Esophagus muscularis mucosa (tissue), 4 donors: ENCODE measurements at regions of chr1 and their contacts with region 1.

Region 1: GRCh38 chr1:203273206-203273868 is 32.0 kb upstream of the BTG2 start:
- DNase-seq: peak; percentile 96
- H3K4me3 ChIP-seq: peak overlapping the region; percentile 30 to 53 (median 38)
- H3K27ac ChIP-seq: peak overlapping the region; percentile 93 to 98 (median 95)
- H3K4me1 ChIP-seq: peaks cover 60 to 83% (median 70%) of the 10 kb centered on the region in 4 donors
- H3K27me3 ChIP-seq: no peaks in the 10 kb centered on the region
- CTCF ChIP-seq: peak; percentile 86 to 99 (median 99)
- EP300 ChIP-seq: no peak
- POLR2A ChIP-seq: no peak

Region 2: DNA sequence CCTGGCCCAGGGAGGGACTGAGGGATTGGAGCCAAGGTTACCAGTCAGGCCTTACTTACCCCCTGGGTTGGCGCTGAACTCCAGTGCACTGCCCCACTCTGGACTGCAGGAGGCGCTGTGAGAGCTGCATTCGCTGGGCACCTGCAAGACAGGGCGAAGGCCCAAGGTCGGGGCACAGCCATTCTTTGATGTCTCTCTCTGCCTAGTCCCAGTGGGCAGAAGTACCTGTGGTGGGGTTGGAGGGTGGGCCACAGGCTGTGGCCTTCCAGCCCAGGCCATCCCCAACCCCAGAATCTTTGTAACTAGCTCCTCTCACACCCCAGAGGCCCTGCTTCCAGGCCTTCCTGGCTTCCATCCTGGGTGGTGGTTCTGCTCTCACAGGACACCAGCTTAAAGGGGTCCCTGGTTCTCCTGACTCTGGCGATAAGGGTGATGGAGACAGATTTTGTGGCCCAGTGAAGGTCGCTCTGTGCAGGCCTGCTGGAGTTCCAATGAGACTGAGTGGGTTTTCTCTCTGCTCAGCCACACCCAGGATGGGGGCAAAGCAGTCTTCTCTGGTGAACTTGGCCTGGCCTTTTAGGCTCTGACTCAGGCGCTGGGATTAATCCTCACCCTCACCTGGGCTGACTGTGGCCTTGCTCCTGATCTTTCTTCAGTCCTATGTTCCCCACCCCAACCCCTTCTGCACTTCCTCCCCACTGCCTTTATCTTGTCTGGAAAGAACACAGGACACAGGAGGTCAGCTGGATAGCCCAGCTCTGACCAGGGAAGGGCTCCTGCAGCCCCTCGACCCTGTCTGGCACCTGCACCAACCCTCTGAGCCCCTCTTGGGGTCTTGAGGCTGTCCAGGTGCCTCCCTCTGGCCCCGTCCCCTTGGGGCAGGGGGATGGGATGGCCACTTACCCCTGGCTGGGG is 188.5 kb before region 1 on chr1:
- intact Hi-C with region 1: no loop called
- DNase-seq: peak; percentile 74
- H3K4me3 ChIP-seq: no peak overlapping the region
- H3K27ac ChIP-seq: no peak overlapping the region
- H3K4me1 ChIP-seq: peaks cover 0 to 2% (median 0%) of the 10 kb centered on the region in 4 donors
- H3K27me3 ChIP-seq: peaks cover 0 to 22% (median 0%) of the 10 kb centered on the region in 4 donors
- CTCF ChIP-seq: no peak
- EP300 ChIP-seq: no peak
- POLR2A ChIP-seq: no peak

Region 3: GRCh38 chr1:203304919-203305808 is 31.8 kb after region 1 on chr1 and contains the start of gene BTG2:
- intact Hi-C with region 1: loop called (anchors 5 kb)
- DNase-seq: peak; percentile 98
- H3K4me3 ChIP-seq: peak within 1 kb of the TSS; percentile 99
- H3K27ac ChIP-seq: peak within 1 kb of the TSS; percentile 99 to 100 (median 100)
- H3K4me1 ChIP-seq: peaks cover 31 to 48% (median 45%) of the 10 kb centered on the region in 4 donors
- H3K27me3 ChIP-seq: no peaks in the 10 kb centered on the region
- CTCF ChIP-seq: no peak
- EP300 ChIP-seq: peak; percentile 64
- POLR2A ChIP-seq: peak; percentile 100
- total RNA-seq, gene BTG2: 67.7 to 656 (median 159) TPM

Region 4: GRCh38 chr1:203486618-203487370 is 213.5 kb after region 1 on chr1:
- intact Hi-C with region 1: loop called (anchors 5 kb)
- DNase-seq: no peak
- H3K4me3 ChIP-seq: peak overlapping the region; percentile 31 to 52 (median 33)
- H3K27ac ChIP-seq: peak overlapping the region; percentile 78 to 94 (median 86)
- H3K4me1 ChIP-seq: peaks cover 23 to 75% (median 72%) of the 10 kb centered on the region in 4 donors
- H3K27me3 ChIP-seq: no peaks in the 10 kb centered on the region
- CTCF ChIP-seq: no peak
- EP300 ChIP-seq: no peak
- POLR2A ChIP-seq: no peak